ENCODE measurements at regions of chr15 and their contacts with region 1.

Region 1: GRCh38 chr15:52078876-52079700 is 33.5 kb downstream of the BCL2L10 start:
- DNase-seq: peak; percentile 51 to 96
- H3K4me3 ChIP-seq: no peak overlapping the region
- H3K27ac ChIP-seq: no peak overlapping the region
- H3K4me1 ChIP-seq: peaks cover 0 to 4% (median 1%) of the 10 kb centered on the region in 4 experiments; a peak in 3 of 7 replicates
- H3K27me3 ChIP-seq: no peaks in the 10 kb centered on the region
- CTCF ChIP-seq: peak; percentile 84 to 92 (median 87)
- EP300 ChIP-seq: no peak
- POLR2A ChIP-seq: no peak
- RAD21 ChIP-seq: peak; percentile 83 to 84

Region 2: GRCh38 chr15:51782357-51782896 is 296.7 kb before region 1 on chr15:
- CTCF ChIA-PET with region 1: interaction called, 11 read pairs
- POLR2A ChIA-PET with region 1: no interaction called
- DNase-seq: no peak
- H3K4me3 ChIP-seq: no peak overlapping the region
- H3K27ac ChIP-seq: no peak overlapping the region
- H3K4me1 ChIP-seq: peaks cover 0 to 6% (median 0%) of the 10 kb centered on the region in 4 experiments; a peak in 2 of 7 replicates
- H3K27me3 ChIP-seq: no peaks in the 10 kb centered on the region
- CTCF ChIP-seq: peak in 2 of 3 experiments; percentile 80 to 84; a peak in 3 of 4 replicates
- EP300 ChIP-seq: no peak
- POLR2A ChIP-seq: no peak
- RAD21 ChIP-seq: peak; percentile 93 to 94

Region 3: GRCh38 chr15:51982013-51982769 is 96.9 kb before region 1 on chr15:
- CTCF ChIA-PET with region 1: interaction called, 25 read pairs
- POLR2A ChIA-PET with region 1: no interaction called
- DNase-seq: no peak
- H3K4me3 ChIP-seq: no peak overlapping the region
- H3K27ac ChIP-seq: no peak overlapping the region
- H3K4me1 ChIP-seq: no peaks in the 10 kb centered on the region
- H3K27me3 ChIP-seq: no peaks in the 10 kb centered on the region
- CTCF ChIP-seq: peak in 2 of 3 experiments; percentile 21 to 47; a peak in 2 of 4 replicates
- EP300 ChIP-seq: no peak
- POLR2A ChIP-seq: no peak
- RAD21 ChIP-seq: peak; percentile 66 to 74

Region 4: DNA sequence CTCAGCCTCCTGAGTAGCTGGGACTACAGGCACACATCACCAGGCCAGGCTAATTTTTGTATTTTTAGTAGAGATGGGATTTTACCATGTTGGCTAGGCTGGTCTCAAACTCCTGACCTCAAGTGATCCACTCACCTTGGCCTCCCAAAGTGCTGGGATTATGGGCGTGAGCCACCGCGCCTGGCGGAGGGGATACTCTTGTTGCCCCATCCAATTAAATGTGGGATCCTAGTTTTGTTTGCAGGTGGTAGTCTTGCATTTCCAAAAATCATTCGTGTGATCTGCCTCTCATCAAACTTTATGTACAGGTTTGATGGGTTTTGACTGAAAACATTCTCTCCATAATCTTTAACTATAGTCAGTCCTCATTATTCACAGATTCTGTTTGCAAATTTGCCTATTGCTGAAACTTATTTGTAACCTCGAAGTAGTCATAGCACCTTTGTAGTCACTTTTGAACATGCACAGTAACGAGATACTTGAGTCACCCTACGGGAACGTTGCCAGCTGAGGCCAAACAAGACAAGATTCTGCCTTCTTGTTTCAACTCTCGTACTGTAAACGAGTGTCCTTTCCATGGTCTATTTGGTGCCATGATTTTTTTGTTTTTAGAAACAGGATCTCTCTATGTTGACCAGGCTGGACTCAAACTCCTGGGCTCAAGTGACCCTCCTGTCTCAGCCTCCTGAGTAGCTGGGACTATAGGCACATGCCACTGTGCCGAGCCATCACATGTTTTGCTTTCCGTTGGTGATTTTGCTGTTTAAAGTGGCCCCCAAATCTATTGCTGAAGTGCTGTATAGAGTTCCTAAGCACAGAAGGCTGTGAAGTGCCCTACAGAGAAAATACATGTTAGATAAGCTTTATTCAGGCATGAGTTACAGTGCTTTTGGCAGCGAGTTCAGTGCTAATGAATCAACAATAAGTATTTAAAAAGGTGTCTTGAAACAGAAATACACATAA is 68.2 kb before region 1 on chr15:
- CTCF ChIA-PET with region 1: interaction called, 10 read pairs
- POLR2A ChIA-PET with region 1: no interaction called
- DNase-seq: no peak
- H3K4me3 ChIP-seq: no peak overlapping the region
- H3K27ac ChIP-seq: no peak overlapping the region
- H3K4me1 ChIP-seq: no peaks in the 10 kb centered on the region
- H3K27me3 ChIP-seq: no peaks in the 10 kb centered on the region
- CTCF ChIP-seq: no peak
- EP300 ChIP-seq: no peak
- POLR2A ChIP-seq: no peak
- RAD21 ChIP-seq: no peak

Region 5: GRCh38 chr15:52093539-52094502 is 14.7 kb after region 1 on chr15:
- CTCF ChIA-PET with region 1: interaction called, 12 read pairs
- POLR2A ChIA-PET with region 1: no interaction called
- DNase-seq: no peak
- H3K4me3 ChIP-seq: no peak overlapping the region
- H3K27ac ChIP-seq: no peak overlapping the region
- H3K4me1 ChIP-seq: no peaks in the 10 kb centered on the region
- H3K27me3 ChIP-seq: no peaks in the 10 kb centered on the region
- CTCF ChIP-seq: no peak
- EP300 ChIP-seq: no peak
- POLR2A ChIP-seq: no peak
- RAD21 ChIP-seq: no peak

Region 6: DNA sequence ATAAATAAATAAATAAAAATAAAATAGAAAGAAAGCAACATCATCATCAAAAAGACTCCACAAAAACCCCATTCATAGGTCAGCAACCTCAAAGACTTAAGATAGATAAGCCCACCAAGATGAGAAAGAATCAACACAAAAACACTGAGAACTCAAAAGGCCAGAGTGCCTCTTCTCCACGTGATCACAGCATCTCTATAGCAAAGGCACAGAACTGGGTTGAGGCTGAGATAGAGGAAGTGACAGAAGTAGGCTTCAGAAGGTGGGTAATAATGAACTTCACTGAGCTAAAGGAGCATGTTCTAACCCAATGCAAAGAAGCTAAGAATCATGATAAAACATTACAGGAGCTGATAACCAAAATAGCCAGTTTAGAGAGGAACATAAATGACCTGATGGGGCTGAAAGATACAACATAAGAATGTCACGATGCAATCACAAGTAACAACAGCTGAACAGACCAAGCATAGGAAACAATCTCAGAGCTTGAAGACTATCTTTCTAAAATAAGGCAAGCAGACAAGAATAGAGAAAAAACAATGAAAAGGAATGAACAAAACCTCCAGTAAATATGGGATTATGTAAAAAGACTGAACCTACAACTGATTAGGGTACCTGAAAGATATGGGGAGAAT is 85.7 kb after region 1 on chr15:
- CTCF ChIA-PET with region 1: no interaction called
- POLR2A ChIA-PET with region 1: no interaction called
- DNase-seq: peak in 1 of 2 experiments; percentile 19
- H3K4me3 ChIP-seq: no peak overlapping the region
- H3K27ac ChIP-seq: no peak overlapping the region
- H3K4me1 ChIP-seq: no peaks in the 10 kb centered on the region; a peak in 2 of 7 replicates
- H3K27me3 ChIP-seq: no peaks in the 10 kb centered on the region
- CTCF ChIP-seq: no peak
- EP300 ChIP-seq: no peak
- POLR2A ChIP-seq: no peak
- RAD21 ChIP-seq: no peak

Measured in H1 (cell line).